ENCODE measurements at regions of chr19 and their contacts with region 1.

Region 1: GRCh38 chr19:8988204-8988603 is 22.0 kb downstream of the MUC16 start:
- DNase-seq: peak in 1 of 2 experiments; percentile 80
- H3K4me3 ChIP-seq: no peak overlapping the region
- H3K27ac ChIP-seq: no peak overlapping the region
- H3K4me1 ChIP-seq: peaks cover 8% of the 10 kb centered on the region; the same call in 1 of the 2 replicates
- H3K27me3 ChIP-seq: no peaks in the 10 kb centered on the region
- CTCF ChIP-seq: peak; percentile 64

Region 2: DNA sequence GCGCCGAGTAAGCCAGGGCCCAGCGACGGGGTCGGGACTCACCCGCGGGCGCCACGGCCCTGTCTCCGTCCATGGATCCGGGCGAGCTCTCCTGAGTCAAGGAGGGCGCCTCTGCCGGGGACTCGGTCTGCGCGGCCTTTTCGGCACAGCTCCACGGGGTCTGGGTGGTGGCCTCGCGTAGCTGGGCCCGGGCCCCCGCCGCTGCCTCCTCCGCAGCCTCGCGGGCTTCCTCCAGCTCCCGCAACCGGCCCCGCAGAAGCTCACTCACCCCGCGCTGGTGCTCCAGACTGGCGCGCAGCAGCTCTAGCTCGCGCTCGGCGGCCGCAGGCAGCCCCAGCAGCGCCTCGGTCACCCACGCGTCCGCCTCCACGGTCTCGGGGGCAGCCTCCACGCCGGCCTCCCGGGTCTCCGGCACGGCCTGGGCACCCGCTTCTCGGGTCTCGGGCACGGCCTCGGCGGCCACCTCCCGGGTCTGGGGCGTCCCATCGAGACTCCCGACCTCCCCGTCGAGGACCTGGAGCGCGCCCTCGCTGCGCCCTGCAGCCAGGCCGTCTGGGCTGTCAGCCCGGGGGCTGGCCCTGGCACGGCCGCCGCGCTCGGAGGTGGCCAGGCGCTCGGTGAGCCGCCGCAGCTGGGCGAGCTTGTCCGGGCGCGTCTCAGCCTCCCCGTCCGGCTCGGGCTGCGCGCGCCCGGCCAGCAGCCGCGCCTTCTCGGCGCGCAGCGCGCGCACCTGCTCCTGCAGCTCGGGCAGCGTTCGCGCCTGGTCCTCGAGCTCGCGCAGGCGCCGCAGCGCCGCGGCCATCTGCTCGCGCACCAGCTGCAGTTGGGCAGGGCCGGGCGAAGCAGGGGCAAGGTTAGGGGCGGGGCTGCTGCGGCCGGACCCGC is 653.5 kb before region 1 on chr19:
- CTCF ChIA-PET with region 1: no interaction called
- POLR2A ChIA-PET with region 1: no interaction called
- intact Hi-C with region 1: no loop called
- DNase-seq: peak; percentile 66 to 83
- H3K4me3 ChIP-seq: peak overlapping the region; percentile 66; the same call in 1 of the 2 replicates
- H3K27ac ChIP-seq: no peak overlapping the region
- H3K4me1 ChIP-seq: no peaks in the 10 kb centered on the region
- H3K27me3 ChIP-seq: no peaks in the 10 kb centered on the region
- CTCF ChIP-seq: no peak

Region 3: DNA sequence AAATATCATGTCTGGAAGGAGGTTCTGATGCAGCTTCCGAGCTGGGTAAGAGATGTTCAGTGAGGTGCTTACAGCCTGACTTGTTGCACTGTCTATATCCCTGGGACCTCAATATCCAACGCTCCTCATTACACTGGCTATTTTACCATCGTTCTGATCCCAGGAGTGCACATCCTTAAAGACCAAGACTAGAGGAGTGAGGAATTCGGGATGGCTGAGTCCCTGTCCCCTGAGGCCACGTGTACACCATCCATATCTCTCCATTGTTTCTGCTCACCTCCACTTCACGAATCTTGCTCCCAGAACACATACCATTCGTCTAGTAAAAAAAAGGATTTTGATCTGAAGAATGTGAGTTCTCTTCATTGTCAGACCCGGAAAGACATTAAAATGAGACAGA is 119.2 kb after region 1 on chr19 and contains the start of gene OR7G2:
- CTCF ChIA-PET with region 1: no interaction called
- POLR2A ChIA-PET with region 1: interaction called, 16 read pairs
- intact Hi-C with region 1: no loop called
- DNase-seq: no peak
- H3K4me3 ChIP-seq: no peak within 1 kb of the TSS
- H3K27ac ChIP-seq: no peak within 1 kb of the TSS
- H3K4me1 ChIP-seq: no peaks in the 10 kb centered on the region
- H3K27me3 ChIP-seq: peaks cover 8% of the 10 kb centered on the region; the same call in 1 of the 2 replicates
- CTCF ChIP-seq: no peak
- total RNA-seq, gene OR7G2: not detected in 2 replicates